B cell (primary cell): ENCODE measurements at regions of chr5 and their contacts with region 1.

Region 1: GRCh38 chr5:159571495-159572238 is 241.4 kb upstream of the IL12B start:
- DNase-seq: no peak
- ATAC-seq: no peak
- H3K4me3 ChIP-seq: no peak overlapping the region
- H3K4me3 Mint-ChIP-seq: no peak overlapping the region
- H3K27ac ChIP-seq: no peak overlapping the region
- H3K27ac Mint-ChIP-seq: no peak overlapping the region
- H3K4me1 ChIP-seq: no peaks in the 10 kb centered on the region
- H3K4me1 Mint-ChIP-seq: no peaks in the 10 kb centered on the region
- H3K27me3 ChIP-seq: no peaks in the 10 kb centered on the region
- H3K27me3 Mint-ChIP-seq: no peaks in the 10 kb centered on the region
- CTCF ChIP-seq: no peak

Region 2: DNA sequence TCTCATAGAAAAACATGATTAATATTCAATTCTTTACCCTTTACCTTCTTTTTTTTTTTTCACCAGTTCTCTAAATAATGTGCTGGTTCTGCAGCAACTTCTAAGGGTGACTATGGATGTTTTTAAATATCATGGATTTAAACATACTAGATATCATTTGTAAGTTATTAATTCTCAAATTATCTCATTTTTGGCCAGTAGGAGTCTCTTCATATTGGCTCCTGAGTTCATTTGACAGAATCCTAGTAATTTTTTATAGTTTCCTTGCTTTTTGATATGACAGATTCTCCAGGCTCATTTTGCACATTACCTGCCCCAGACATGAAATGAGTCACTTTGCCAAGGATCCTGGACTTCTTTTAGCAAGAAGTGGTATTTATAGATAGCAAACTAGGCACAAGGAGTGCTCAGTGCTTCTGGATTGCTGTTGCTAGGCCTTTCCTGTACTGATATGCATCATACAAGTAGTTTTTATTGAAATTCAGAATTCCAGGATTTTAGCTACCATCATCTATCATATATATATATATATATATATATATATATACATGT is 40.0 kb before region 1 on chr5:
- CTCF ChIA-PET with region 1: no interaction called
- POLR2A ChIA-PET with region 1: no interaction called
- intact Hi-C with region 1: loop called (anchors 1 kb)
- DNase-seq: no peak
- ATAC-seq: no peak
- H3K4me3 ChIP-seq: no peak overlapping the region
- H3K4me3 Mint-ChIP-seq: no peak overlapping the region
- H3K27ac ChIP-seq: no peak overlapping the region
- H3K27ac Mint-ChIP-seq: no peak overlapping the region
- H3K4me1 ChIP-seq: no peaks in the 10 kb centered on the region
- H3K4me1 Mint-ChIP-seq: no peaks in the 10 kb centered on the region
- H3K27me3 ChIP-seq: no peaks in the 10 kb centered on the region
- H3K27me3 Mint-ChIP-seq: no peaks in the 10 kb centered on the region
- CTCF ChIP-seq: no peak